Activated B cell treated with CpG ODN at 0.5 μM for 24 hours (primary cell): ENCODE measurements at regions of chrX and their contacts with region 1.

Region 1: DNA sequence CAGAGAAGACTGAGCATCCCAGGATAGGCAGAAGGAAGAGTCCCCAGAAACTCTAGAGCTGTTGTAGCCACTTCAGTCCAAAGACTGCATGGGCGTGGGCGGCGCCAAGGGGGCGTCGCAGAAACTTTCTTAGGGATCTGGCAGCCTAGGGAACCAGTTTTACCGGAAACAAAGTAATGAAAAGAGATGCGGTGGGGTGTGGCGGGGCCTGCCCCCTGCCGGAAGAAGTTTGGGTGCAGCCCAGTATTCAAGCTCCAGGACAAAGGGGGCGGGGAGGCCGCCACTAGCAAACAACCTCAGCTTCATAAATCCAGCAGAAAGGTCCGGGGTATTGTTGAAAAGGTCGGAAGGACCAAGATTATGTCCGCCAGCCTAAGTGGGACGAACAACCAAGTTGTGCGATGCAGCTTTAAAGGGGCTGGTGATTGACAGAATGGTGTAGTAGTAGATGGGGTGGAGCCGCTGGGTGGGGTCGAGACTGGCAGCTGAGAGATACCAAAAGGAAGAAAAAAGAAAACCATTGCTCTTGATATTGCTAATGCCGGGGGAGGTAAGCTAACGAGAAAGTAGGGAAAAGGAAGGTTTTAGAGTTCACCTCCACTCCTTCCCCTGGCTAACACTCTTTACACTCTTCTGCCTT is 190.5 kb downstream of the RRAGB start:
- DNase-seq: peak; percentile 34
- ATAC-seq: peak; percentile 83
- H3K4me3 Mint-ChIP-seq: peak overlapping the region; percentile 93
- H3K27ac Mint-ChIP-seq: peak overlapping the region; percentile 94
- H3K4me1 Mint-ChIP-seq: peaks cover 38% of the 10 kb centered on the region
- H3K27me3 Mint-ChIP-seq: no peaks in the 10 kb centered on the region
- CTCF ChIP-seq: no peak

Region 2: GRCh38 chrX:55488593-55489313 is 419.3 kb before region 1 on chrX:
- CTCF ChIA-PET with region 1: no interaction called
- POLR2A ChIA-PET with region 1: interaction called, 11 read pairs
- intact Hi-C with region 1: no loop called
- DNase-seq: peak; percentile 61
- ATAC-seq: peak; percentile 74
- H3K4me3 Mint-ChIP-seq: peak overlapping the region; percentile 94
- H3K27ac Mint-ChIP-seq: peak overlapping the region; percentile 98
- H3K4me1 Mint-ChIP-seq: peaks cover 17% of the 10 kb centered on the region
- H3K27me3 Mint-ChIP-seq: no peaks in the 10 kb centered on the region
- CTCF ChIP-seq: no peak

Region 3: DNA sequence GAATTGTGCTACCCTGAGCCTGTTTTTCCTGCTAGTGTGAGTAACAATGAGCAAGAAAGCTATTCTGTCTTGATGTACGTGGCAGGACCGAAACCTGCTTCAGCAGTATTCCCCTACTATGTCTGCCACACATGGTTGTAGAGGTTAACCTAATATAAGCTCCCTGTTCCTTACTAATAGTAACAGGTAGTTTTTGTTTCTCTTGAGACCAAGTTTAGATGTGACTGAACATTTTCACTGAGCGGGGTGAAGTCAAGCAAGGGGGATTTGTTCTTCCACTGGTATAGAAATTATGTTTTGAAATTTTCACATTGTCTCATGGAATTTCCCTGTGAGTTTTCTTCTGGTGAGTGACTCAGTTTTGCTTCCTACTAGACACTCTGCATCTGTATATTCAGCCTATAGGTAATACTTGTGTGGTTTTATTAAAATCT is 153.2 kb before region 1 on chrX:
- CTCF ChIA-PET with region 1: no interaction called
- POLR2A ChIA-PET with region 1: interaction called, 3 read pairs
- intact Hi-C with region 1: loop called (anchors 5 kb)
- DNase-seq: no peak
- ATAC-seq: peak; percentile 40
- H3K4me3 Mint-ChIP-seq: no peak overlapping the region
- H3K27ac Mint-ChIP-seq: peak overlapping the region; percentile 41
- H3K4me1 Mint-ChIP-seq: peaks cover 5% of the 10 kb centered on the region
- H3K27me3 Mint-ChIP-seq: no peaks in the 10 kb centered on the region
- CTCF ChIP-seq: no peak

Region 4: GRCh38 chrX:55919367-55920221 is 11.5 kb after region 1 on chrX:
- CTCF ChIA-PET with region 1: interaction called, 19 read pairs
- POLR2A ChIA-PET with region 1: interaction called, 19 read pairs
- intact Hi-C with region 1: loop called (anchors 1 kb)
- DNase-seq: peak; percentile 50
- ATAC-seq: peak; percentile 88
- H3K4me3 Mint-ChIP-seq: peak overlapping the region; percentile 52
- H3K27ac Mint-ChIP-seq: peak overlapping the region; percentile 79
- H3K4me1 Mint-ChIP-seq: peaks cover 38% of the 10 kb centered on the region
- H3K27me3 Mint-ChIP-seq: no peaks in the 10 kb centered on the region
- CTCF ChIP-seq: no peak

Region 5: GRCh38 chrX:56089388-56089787 is 181.3 kb after region 1 on chrX:
- CTCF ChIA-PET with region 1: no interaction called
- POLR2A ChIA-PET with region 1: no interaction called
- intact Hi-C with region 1: no loop called
- DNase-seq: no peak
- ATAC-seq: no peak
- H3K4me3 Mint-ChIP-seq: no peak overlapping the region
- H3K27ac Mint-ChIP-seq: no peak overlapping the region
- H3K4me1 Mint-ChIP-seq: peaks cover 16% of the 10 kb centered on the region
- H3K27me3 Mint-ChIP-seq: no peaks in the 10 kb centered on the region
- CTCF ChIP-seq: no peak

Region 6: GRCh38 chrX:56232221-56233082 is 324.4 kb after region 1 on chrX and contains the start of gene KLF8:
- CTCF ChIA-PET with region 1: no interaction called
- POLR2A ChIA-PET with region 1: interaction called, 24 read pairs
- intact Hi-C with region 1: loop called (anchors 1 kb)
- DNase-seq: peak; percentile 25
- ATAC-seq: peak; percentile 83
- H3K4me3 Mint-ChIP-seq: peak within 1 kb of the TSS; percentile 88
- H3K27ac Mint-ChIP-seq: peak within 1 kb of the TSS; percentile 83
- H3K4me1 Mint-ChIP-seq: peaks cover 38% of the 10 kb centered on the region
- H3K27me3 Mint-ChIP-seq: no peaks in the 10 kb centered on the region
- CTCF ChIP-seq: no peak
- total RNA-seq, gene KLF8: 15.2 and 17.8 TPM in 2 replicates

Region 7: GRCh38 chrX:56729152-56729850 is 821.2 kb after region 1 on chrX and contains the start of gene NBDY:
- CTCF ChIA-PET with region 1: interaction called, 5 read pairs
- POLR2A ChIA-PET with region 1: interaction called, 11 read pairs
- intact Hi-C with region 1: loop called (anchors 5 kb)
- DNase-seq: peak; percentile 20
- ATAC-seq: peak; percentile 78
- H3K4me3 Mint-ChIP-seq: peak within 1 kb of the TSS; percentile 94
- H3K27ac Mint-ChIP-seq: peak within 1 kb of the TSS; percentile 92
- H3K4me1 Mint-ChIP-seq: peaks cover 25% of the 10 kb centered on the region
- H3K27me3 Mint-ChIP-seq: no peaks in the 10 kb centered on the region
- CTCF ChIP-seq: no peak
- total RNA-seq, gene NBDY: 30.0 and 41.0 TPM in 2 replicates